Naive thymus-derived CD4-positive, alpha-beta T cell (primary cell): ENCODE measurements at regions of chr6 and their contacts with region 1.

Region 1: DNA sequence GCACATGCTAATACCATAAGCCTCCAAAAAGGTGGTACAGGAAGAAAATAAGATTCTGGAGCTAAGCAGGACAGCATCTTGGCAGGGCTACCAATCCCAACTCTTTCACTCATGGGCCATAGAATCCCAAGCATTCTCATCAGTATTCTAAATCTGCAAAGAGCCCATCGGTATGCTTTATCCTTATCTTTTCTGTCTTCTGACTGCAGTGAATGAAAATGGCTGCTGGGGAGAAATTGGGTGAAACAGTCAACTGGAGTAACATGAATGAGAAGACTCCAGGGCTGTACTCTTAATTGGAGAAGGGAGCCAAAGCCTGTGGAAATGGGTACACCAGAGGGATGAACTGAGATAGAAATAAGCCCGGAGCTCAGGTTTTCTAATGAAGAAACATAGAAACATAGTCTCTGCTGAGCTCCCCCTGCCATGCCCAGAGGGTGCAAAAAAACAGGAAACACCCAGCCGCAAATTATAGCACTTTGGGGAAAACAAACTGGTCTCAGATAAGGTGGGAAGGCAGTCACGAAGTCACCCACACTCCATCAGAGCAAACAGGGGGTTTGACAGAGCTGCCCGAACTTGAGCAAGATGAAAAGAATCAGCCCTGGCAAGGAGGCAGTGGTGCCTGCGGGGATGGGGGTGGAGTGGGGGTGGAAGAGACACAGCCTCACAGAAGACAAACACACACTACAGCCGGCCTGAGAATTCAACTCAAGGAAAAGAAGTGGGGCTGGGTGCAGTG is 35.4 kb upstream of the E2F3 start:
- DNase-seq: peak in 8 of 9 donors; percentile 25 to 79 (median 66)
- ATAC-seq: peak; percentile 82
- H3K4me3 ChIP-seq: peak overlapping the region; percentile 15
- H3K4me3 Mint-ChIP-seq: peak overlapping the region; percentile 79 to 92 (median 84)
- H3K27ac ChIP-seq: peak overlapping the region; percentile 65
- H3K27ac Mint-ChIP-seq: peak overlapping the region; percentile 91 to 99 (median 97)
- H3K4me1 ChIP-seq: peaks cover 55 to 56% of the 10 kb centered on the region in 2 donors
- H3K4me1 Mint-ChIP-seq: peaks cover 48 to 73% (median 65%) of the 10 kb centered on the region in 7 donors
- H3K27me3 ChIP-seq: no peaks in the 10 kb centered on the region
- H3K27me3 Mint-ChIP-seq: no peaks in the 10 kb centered on the region

Region 2: GRCh38 chr6:20325641-20326421 is 40.4 kb before region 1 on chr6:
- CTCF ChIA-PET with region 1: interaction called, 26 read pairs
- POLR2A ChIA-PET with region 1: interaction called, 202 read pairs
- intact Hi-C with region 1: no loop called
- DNase-seq: no peak
- ATAC-seq: peak; percentile 61
- H3K4me3 ChIP-seq: no peak overlapping the region
- H3K4me3 Mint-ChIP-seq: no peak overlapping the region
- H3K27ac ChIP-seq: no peak overlapping the region
- H3K27ac Mint-ChIP-seq: no peak overlapping the region
- H3K4me1 ChIP-seq: no peaks in the 10 kb centered on the region
- H3K4me1 Mint-ChIP-seq: peaks cover 0 to 5% (median 2%) of the 10 kb centered on the region in 7 donors
- H3K27me3 ChIP-seq: no peaks in the 10 kb centered on the region
- H3K27me3 Mint-ChIP-seq: peaks cover 0 to 38% (median 0%) of the 10 kb centered on the region in 5 donors

Region 3: GRCh38 chr6:20340068-20340848 is 26.0 kb before region 1 on chr6:
- CTCF ChIA-PET with region 1: interaction called, 13 read pairs
- POLR2A ChIA-PET with region 1: interaction called, 51 read pairs
- intact Hi-C with region 1: loop called (anchors 1 kb)
- DNase-seq: no peak
- ATAC-seq: no peak
- H3K4me3 ChIP-seq: no peak overlapping the region
- H3K4me3 Mint-ChIP-seq: no peak overlapping the region
- H3K27ac ChIP-seq: no peak overlapping the region
- H3K27ac Mint-ChIP-seq: peak overlapping the region in 1 of 9 donors; percentile 70
- H3K4me1 ChIP-seq: peaks cover 5 to 8% of the 10 kb centered on the region in 2 donors
- H3K4me1 Mint-ChIP-seq: peaks cover 13 to 46% (median 30%) of the 10 kb centered on the region in 7 donors
- H3K27me3 ChIP-seq: no peaks in the 10 kb centered on the region
- H3K27me3 Mint-ChIP-seq: no peaks in the 10 kb centered on the region

Region 4: GRCh38 chr6:20377623-20378265 is 11.5 kb after region 1 on chr6:
- CTCF ChIA-PET with region 1: interaction called, 7 read pairs
- POLR2A ChIA-PET with region 1: interaction called, 74 read pairs
- intact Hi-C with region 1: loop called in 1 of 2 experiments (anchors 1 kb)
- DNase-seq: no peak
- ATAC-seq: peak; percentile 49
- H3K4me3 ChIP-seq: no peak overlapping the region
- H3K4me3 Mint-ChIP-seq: peak overlapping the region in 1 of 10 donors; percentile 40
- H3K27ac ChIP-seq: no peak overlapping the region
- H3K27ac Mint-ChIP-seq: peak overlapping the region in 2 of 9 donors; percentile 63 to 71
- H3K4me1 ChIP-seq: peaks cover 11 to 14% of the 10 kb centered on the region in 2 donors
- H3K4me1 Mint-ChIP-seq: peaks cover 8 to 28% (median 25%) of the 10 kb centered on the region in 7 donors
- H3K27me3 ChIP-seq: no peaks in the 10 kb centered on the region
- H3K27me3 Mint-ChIP-seq: peaks cover 0 to 2% (median 0%) of the 10 kb centered on the region in 5 donors

Region 5: DNA sequence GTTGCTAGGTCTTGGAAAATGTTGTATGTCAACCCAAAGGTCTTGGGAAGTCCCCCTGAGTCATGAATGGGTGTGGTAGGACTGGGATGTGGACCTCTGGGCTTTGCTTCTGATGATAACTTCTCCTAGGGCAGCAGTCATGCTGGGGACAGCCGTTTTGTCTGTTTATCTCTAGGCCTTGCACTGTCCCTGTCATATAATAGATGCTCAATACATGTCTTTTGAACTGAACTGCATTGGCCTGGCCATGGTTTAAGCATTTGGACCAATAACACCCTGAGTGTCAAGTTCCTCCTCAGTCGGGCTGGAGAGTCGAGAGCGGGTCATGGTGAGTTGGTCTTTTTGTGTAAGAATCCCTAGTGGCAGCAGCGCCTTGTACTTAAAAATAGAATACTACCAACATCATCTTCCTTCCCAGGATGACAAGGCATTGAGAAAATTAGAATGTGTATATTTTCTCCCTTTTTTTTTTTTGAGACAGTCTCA is 78.6 kb after region 1 on chr6:
- CTCF ChIA-PET with region 1: no interaction called
- POLR2A ChIA-PET with region 1: no interaction called
- intact Hi-C with region 1: no loop called
- DNase-seq: no peak
- ATAC-seq: peak; percentile 80
- H3K4me3 ChIP-seq: no peak overlapping the region
- H3K4me3 Mint-ChIP-seq: no peak overlapping the region
- H3K27ac ChIP-seq: no peak overlapping the region
- H3K27ac Mint-ChIP-seq: peak overlapping the region in 1 of 9 donors; percentile 6
- H3K4me1 ChIP-seq: peaks cover 0 to 11% of the 10 kb centered on the region in 2 donors
- H3K4me1 Mint-ChIP-seq: peaks cover 12 to 39% (median 20%) of the 10 kb centered on the region in 7 donors
- H3K27me3 ChIP-seq: no peaks in the 10 kb centered on the region
- H3K27me3 Mint-ChIP-seq: no peaks in the 10 kb centered on the region

Region 6: DNA sequence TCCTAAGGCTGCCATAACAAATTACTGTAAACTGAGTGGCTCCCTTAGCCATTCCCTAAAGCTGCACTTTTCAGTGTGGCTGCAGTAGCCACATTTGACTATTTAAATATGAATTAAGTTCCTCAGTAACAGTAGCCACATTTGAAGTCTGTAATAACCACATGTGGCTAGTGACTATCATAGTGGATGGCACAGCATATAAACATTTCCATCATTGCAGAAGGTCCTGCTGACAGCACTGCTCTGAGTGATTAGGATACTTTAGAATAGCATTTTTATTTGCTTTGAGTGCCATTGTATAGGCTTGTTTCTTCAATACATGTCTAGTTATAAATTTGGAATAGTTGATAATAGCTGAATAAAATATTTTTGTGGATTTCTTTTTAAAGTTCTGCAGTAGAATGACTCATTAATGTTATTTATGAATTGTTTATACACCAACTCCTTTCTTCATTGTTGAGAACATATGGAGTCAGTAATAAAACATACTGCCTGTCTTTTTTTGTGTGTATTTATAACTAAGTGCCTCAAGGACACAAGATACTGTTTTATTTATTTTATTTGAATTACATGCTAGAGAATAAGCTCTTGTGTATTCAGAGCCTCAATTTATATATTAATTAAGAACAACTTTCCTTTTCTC is 385.2 kb after region 1 on chr6:
- CTCF ChIA-PET with region 1: no interaction called
- POLR2A ChIA-PET with region 1: no interaction called
- intact Hi-C with region 1: no loop called
- DNase-seq: no peak
- ATAC-seq: no peak
- H3K4me3 ChIP-seq: no peak overlapping the region
- H3K4me3 Mint-ChIP-seq: no peak overlapping the region
- H3K27ac ChIP-seq: no peak overlapping the region
- H3K27ac Mint-ChIP-seq: no peak overlapping the region
- H3K4me1 ChIP-seq: no peaks in the 10 kb centered on the region
- H3K4me1 Mint-ChIP-seq: peaks cover 0 to 34% (median 13%) of the 10 kb centered on the region in 7 donors
- H3K27me3 ChIP-seq: no peaks in the 10 kb centered on the region
- H3K27me3 Mint-ChIP-seq: no peaks in the 10 kb centered on the region